ENCODE measurements at regions of chr11 and their contacts with region 1.

Region 1: DNA sequence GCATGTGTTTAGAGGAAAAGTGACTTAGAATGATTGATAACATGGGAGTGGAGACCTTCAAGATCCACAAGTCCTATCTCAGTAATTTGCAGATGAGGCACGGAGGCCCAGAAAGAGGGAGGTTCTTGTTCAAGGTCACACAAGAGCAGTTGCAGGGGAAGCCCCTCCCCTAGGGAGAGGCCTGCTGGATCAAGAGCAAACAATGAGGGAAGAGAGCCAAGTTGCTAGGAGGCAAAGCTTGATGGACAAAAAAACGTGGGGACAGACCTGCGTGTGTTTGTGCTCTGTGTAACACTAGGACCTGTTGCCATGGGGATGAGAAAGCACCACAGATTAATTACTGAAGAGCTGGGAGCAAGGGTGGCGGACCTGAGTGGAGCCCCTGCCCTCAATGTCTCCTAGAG is 6.4 kb upstream of the MFRP start:
- DNase-seq: peak in 2 of 3 donors; percentile 35 to 44
- ATAC-seq: peak; percentile 57
- H3K4me3 ChIP-seq: no peak overlapping the region
- H3K4me1 ChIP-seq: peaks cover 11% of the 10 kb centered on the region
- CTCF ChIP-seq: no peak

Region 2: GRCh38 chr11:119474682-119475596 is 122.1 kb after region 1 on chr11:
- intact Hi-C with region 1: loop called in 1 of 2 experiments (anchors 5 kb)
- DNase-seq: peak in 1 of 3 donors; percentile 72
- ATAC-seq: peak; percentile 71
- H3K4me3 ChIP-seq: no peak overlapping the region
- H3K4me1 ChIP-seq: no peaks in the 10 kb centered on the region
- CTCF ChIP-seq: peak; percentile 64